ENCODE measurements at regions of chr14 and their contacts with region 1.

Region 1: DNA sequence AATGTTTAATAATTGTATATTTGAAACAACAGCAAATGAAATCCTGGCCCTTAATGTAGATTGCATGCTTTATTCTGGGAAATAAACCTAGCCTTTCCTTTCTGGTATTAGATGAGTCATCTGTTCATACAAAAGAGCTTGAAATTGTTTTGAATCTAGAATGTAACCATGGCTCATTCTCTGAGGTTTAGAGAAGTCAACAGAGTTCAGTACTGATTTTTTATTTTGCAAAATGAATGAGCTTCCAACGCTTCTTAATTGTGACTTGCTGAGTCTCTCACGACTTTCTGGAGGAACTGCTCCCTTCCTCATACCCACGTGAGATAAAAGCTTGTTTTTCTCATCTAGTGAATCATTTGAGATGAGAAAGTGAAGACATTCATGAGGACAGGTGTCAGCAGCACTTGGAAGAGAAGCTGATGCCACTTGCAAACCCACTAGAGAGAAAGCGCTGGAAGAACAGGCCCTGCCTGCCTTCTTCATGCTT is 509.6 kb downstream of the VRK1 start:
- DNase-seq: peak; percentile 67
- ATAC-seq: peak; percentile 68
- H3K4me3 ChIP-seq: no peak overlapping the region
- H3K27ac ChIP-seq: peak overlapping the region; percentile 91
- H3K4me1 ChIP-seq: peaks cover 13% of the 10 kb centered on the region
- H3K27me3 ChIP-seq: no peaks in the 10 kb centered on the region
- CTCF ChIP-seq: no peak
- EP300 ChIP-seq: 0 out of 4 replicates have a peak, but pooled peaks have one; percentile 10 to 29
- POLR2A ChIP-seq: no peak
- RAD21 ChIP-seq: no peak

Region 2: GRCh38 chr14:97329701-97330100 is 22.9 kb after region 1 on chr14:
- CTCF ChIA-PET with region 1: interaction called, 3 read pairs
- POLR2A ChIA-PET with region 1: no interaction called
- RAD21 ChIA-PET with region 1: interaction called, 4 read pairs
- SMC1A ChIA-PET with region 1: interaction called, 34 read pairs
- in situ Hi-C with region 1: no loop called
- intact Hi-C with region 1: loop called (anchors 1 kb)
- DNase-seq: no peak
- ATAC-seq: no peak
- H3K4me3 ChIP-seq: no peak overlapping the region
- H3K27ac ChIP-seq: no peak overlapping the region
- H3K4me1 ChIP-seq: peaks cover 13% of the 10 kb centered on the region
- H3K27me3 ChIP-seq: no peaks in the 10 kb centered on the region
- CTCF ChIP-seq: no peak
- EP300 ChIP-seq: no peak
- POLR2A ChIP-seq: no peak
- RAD21 ChIP-seq: no peak

Region 3: DNA sequence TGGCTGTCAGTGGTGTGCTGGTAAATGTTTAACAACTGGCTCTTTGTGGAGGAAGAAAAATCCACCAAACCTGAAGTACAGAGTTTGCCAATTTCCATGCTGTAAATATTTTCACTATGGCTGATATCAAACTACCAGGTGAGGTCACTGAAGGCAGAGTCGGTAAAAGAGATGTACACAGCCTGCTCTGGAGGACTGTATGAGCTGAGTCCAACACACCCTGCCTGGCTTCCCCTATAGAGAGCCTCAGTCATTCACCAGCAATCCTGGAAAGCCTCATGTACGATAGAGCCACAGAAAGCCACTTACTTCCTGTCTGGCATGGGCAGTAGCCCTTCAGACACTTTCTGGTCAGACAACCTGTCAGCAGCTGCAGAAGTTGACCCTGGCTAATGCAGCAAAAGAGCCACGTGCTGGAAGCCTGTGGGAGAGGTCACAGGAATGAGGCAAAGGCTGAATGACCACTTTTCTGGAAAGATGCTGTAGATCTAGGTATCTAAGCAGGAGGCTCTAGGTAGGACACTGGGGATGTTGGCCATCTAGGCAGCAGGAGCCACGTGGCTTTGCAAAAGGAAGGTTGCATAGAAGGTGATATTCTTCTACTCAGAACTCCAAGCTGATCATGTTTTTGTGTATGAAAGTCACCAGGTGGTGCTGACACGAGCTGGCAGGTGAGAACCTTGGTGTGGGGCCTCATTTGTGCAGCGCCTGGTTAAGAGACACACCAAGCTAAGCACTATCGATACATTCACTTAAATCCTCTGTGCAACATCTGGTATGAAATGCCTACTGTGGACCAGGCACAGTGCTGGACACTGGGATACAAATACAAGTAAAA is 44.3 kb after region 1 on chr14:
- CTCF ChIA-PET with region 1: interaction called, 3 read pairs
- POLR2A ChIA-PET with region 1: interaction called, 5 read pairs
- RAD21 ChIA-PET with region 1: interaction called, 15 read pairs
- SMC1A ChIA-PET with region 1: interaction called, 8 read pairs
- in situ Hi-C with region 1: no loop called
- intact Hi-C with region 1: loop called (anchors 2 kb)
- DNase-seq: no peak
- ATAC-seq: peak; percentile 55
- H3K4me3 ChIP-seq: no peak overlapping the region
- H3K27ac ChIP-seq: no peak overlapping the region
- H3K4me1 ChIP-seq: no peaks in the 10 kb centered on the region
- H3K27me3 ChIP-seq: no peaks in the 10 kb centered on the region
- CTCF ChIP-seq: no peak
- EP300 ChIP-seq: no peak
- POLR2A ChIP-seq: no peak
- RAD21 ChIP-seq: no peak

Region 4: GRCh38 chr14:97366400-97366799 is 59.6 kb after region 1 on chr14:
- CTCF ChIA-PET with region 1: interaction called, 6 read pairs
- POLR2A ChIA-PET with region 1: interaction called, 4 read pairs
- RAD21 ChIA-PET with region 1: interaction called, 10 read pairs
- SMC1A ChIA-PET with region 1: interaction called, 8 read pairs
- in situ Hi-C with region 1: no loop called
- intact Hi-C with region 1: no loop called
- DNase-seq: no peak
- ATAC-seq: no peak
- H3K4me3 ChIP-seq: no peak overlapping the region
- H3K27ac ChIP-seq: no peak overlapping the region
- H3K4me1 ChIP-seq: no peaks in the 10 kb centered on the region; the same call in 1 of the 2 replicates
- H3K27me3 ChIP-seq: no peaks in the 10 kb centered on the region
- CTCF ChIP-seq: no peak
- EP300 ChIP-seq: no peak
- POLR2A ChIP-seq: no peak
- RAD21 ChIP-seq: no peak

Region 5: GRCh38 chr14:97410667-97411620 is 104.1 kb after region 1 on chr14:
- CTCF ChIA-PET with region 1: interaction called, 4 read pairs
- POLR2A ChIA-PET with region 1: interaction called, 5 read pairs
- RAD21 ChIA-PET with region 1: interaction called, 7 read pairs
- SMC1A ChIA-PET with region 1: interaction called, 19 read pairs
- in situ Hi-C with region 1: no loop called
- intact Hi-C with region 1: loop called (anchors 2 kb)
- DNase-seq: no peak
- ATAC-seq: peak; percentile 37; the same call in 2 of the 3 replicates
- H3K4me3 ChIP-seq: no peak overlapping the region
- H3K27ac ChIP-seq: peak overlapping the region; percentile 53
- H3K4me1 ChIP-seq: peaks cover 13% of the 10 kb centered on the region
- H3K27me3 ChIP-seq: no peaks in the 10 kb centered on the region
- CTCF ChIP-seq: peak in 2 of 3 experiments; percentile 2 to 26; a peak in 1 of 6 replicates
- EP300 ChIP-seq: no peak
- POLR2A ChIP-seq: no peak
- RAD21 ChIP-seq: peak; percentile 43; the same call in 1 of the 2 replicates

Region 6: GRCh38 chr14:97506626-97507025 is 199.8 kb after region 1 on chr14:
- CTCF ChIA-PET with region 1: no interaction called
- POLR2A ChIA-PET with region 1: no interaction called
- RAD21 ChIA-PET with region 1: no interaction called
- SMC1A ChIA-PET with region 1: no interaction called
- in situ Hi-C with region 1: no loop called
- intact Hi-C with region 1: no loop called
- DNase-seq: no peak
- ATAC-seq: no peak
- H3K4me3 ChIP-seq: no peak overlapping the region
- H3K27ac ChIP-seq: no peak overlapping the region
- H3K4me1 ChIP-seq: no peaks in the 10 kb centered on the region
- H3K27me3 ChIP-seq: no peaks in the 10 kb centered on the region
- CTCF ChIP-seq: no peak
- EP300 ChIP-seq: no peak
- POLR2A ChIP-seq: no peak
- RAD21 ChIP-seq: no peak

Region 7: DNA sequence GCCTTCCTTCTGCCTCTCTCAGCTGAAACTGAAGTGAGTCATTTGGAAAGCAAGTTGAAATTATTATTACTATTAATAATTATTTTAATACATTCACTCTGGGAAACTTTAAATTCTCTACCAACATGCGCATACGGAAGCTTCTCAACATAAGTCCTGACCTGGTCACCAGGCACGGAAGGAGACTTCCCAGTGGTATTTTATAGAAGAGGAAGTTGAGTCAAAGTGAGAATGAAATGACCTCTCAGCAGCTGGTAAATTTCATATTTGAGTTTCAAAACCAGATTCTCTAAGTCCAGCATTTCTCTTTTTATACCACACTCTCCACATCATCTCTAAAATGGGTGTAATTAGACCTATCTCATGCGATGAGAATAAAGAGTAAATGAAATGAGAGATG is 237.8 kb after region 1 on chr14:
- CTCF ChIA-PET with region 1: no interaction called
- POLR2A ChIA-PET with region 1: no interaction called
- RAD21 ChIA-PET with region 1: interaction called, 3 read pairs
- SMC1A ChIA-PET with region 1: no interaction called
- in situ Hi-C with region 1: no loop called
- intact Hi-C with region 1: loop called (anchors 2 kb)
- DNase-seq: peak; percentile 21
- ATAC-seq: peak; percentile 68
- H3K4me3 ChIP-seq: no peak overlapping the region
- H3K27ac ChIP-seq: peak overlapping the region; percentile 9; the same call in 1 of the 2 replicates
- H3K4me1 ChIP-seq: peaks cover 6% of the 10 kb centered on the region
- H3K27me3 ChIP-seq: no peaks in the 10 kb centered on the region
- CTCF ChIP-seq: no peak
- EP300 ChIP-seq: peak in 1 of 2 experiments; percentile 47; a peak in 1 of 4 replicates
- POLR2A ChIP-seq: no peak
- RAD21 ChIP-seq: no peak

Measured in GM12878 (cell line).